ENCODE measurements at regions of chrX and their contacts with region 1.

Region 1: DNA sequence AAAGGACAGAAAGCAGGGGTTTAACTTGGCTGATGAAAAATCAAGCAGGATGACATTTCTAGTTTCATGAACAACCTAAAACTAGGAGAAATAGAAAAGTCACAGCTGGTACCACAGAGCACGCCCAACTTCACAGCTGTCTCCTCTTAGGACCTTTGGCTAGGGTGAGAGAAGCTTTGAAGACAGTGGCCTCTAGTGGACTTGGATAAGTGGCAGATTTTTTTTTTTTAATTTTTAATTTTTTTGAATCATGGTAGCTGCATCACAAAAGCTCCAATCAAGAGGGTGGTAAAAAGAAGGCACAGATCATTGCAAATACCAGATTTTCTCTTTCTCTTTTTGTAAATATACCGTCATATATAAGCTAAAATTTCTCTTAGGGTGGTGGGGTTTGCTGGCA is 20.2 kb upstream of the MAP3K15 start:
- DNase-seq: no peak
- H3K4me3 Mint-ChIP-seq: no peak overlapping the region
- H3K27ac Mint-ChIP-seq: no peak overlapping the region
- H3K4me1 Mint-ChIP-seq: no peaks in the 10 kb centered on the region
- H3K27me3 Mint-ChIP-seq: no peaks in the 10 kb centered on the region
- CTCF ChIP-seq: no peak

Region 2: GRCh38 chrX:19326567-19326966 is 208.9 kb before region 1 on chrX:
- CTCF ChIA-PET with region 1: no interaction called
- intact Hi-C with region 1: no loop called
- DNase-seq: no peak
- H3K4me3 Mint-ChIP-seq: no peak overlapping the region
- H3K27ac Mint-ChIP-seq: no peak overlapping the region
- H3K4me1 Mint-ChIP-seq: no peaks in the 10 kb centered on the region
- H3K27me3 Mint-ChIP-seq: peaks cover 25% of the 10 kb centered on the region
- CTCF ChIP-seq: no peak

Region 3: GRCh38 chrX:19372170-19372546 is 163.3 kb before region 1 on chrX:
- CTCF ChIA-PET with region 1: interaction called, 5 read pairs
- intact Hi-C with region 1: loop called (anchors 2 kb)
- DNase-seq: peak; percentile 77
- H3K4me3 Mint-ChIP-seq: peak overlapping the region; percentile 45
- H3K27ac Mint-ChIP-seq: no peak overlapping the region
- H3K4me1 Mint-ChIP-seq: peaks cover 9% of the 10 kb centered on the region
- H3K27me3 Mint-ChIP-seq: no peaks in the 10 kb centered on the region
- CTCF ChIP-seq: peak; percentile 58

Region 4: GRCh38 chrX:19382555-19383145 is 152.8 kb before region 1 on chrX:
- CTCF ChIA-PET with region 1: interaction called, 10 read pairs
- intact Hi-C with region 1: no loop called
- DNase-seq: peak; percentile 75
- H3K4me3 Mint-ChIP-seq: no peak overlapping the region
- H3K27ac Mint-ChIP-seq: no peak overlapping the region
- H3K4me1 Mint-ChIP-seq: no peaks in the 10 kb centered on the region
- H3K27me3 Mint-ChIP-seq: no peaks in the 10 kb centered on the region
- CTCF ChIP-seq: peak; percentile 53

Region 5: GRCh38 chrX:19616959-19617358 is 81.5 kb after region 1 on chrX:
- CTCF ChIA-PET with region 1: no interaction called
- intact Hi-C with region 1: no loop called
- DNase-seq: no peak
- H3K4me3 Mint-ChIP-seq: no peak overlapping the region
- H3K27ac Mint-ChIP-seq: no peak overlapping the region
- H3K4me1 Mint-ChIP-seq: peaks cover 8% of the 10 kb centered on the region
- H3K27me3 Mint-ChIP-seq: no peaks in the 10 kb centered on the region
- CTCF ChIP-seq: no peak

Region 6: DNA sequence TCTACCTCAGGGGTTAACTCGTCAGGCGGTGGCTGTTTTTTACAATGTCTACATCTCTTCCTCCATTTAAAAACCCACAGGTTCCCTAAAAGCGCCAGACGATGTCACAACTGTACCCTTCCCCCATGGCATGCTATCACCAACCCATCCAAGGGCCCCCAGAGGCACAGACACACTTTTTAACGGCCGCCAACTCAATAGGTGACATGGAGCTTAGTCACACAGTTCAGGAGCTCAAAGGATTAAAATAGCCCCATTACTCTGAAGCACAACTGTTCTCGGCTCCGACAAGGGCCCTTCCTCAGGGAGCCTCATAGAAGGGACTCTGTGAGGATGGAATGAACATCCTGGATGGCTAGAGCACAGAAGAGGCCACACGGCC is 339.6 kb after region 1 on chrX:
- CTCF ChIA-PET with region 1: no interaction called
- intact Hi-C with region 1: no loop called
- DNase-seq: no peak
- H3K4me3 Mint-ChIP-seq: no peak overlapping the region
- H3K27ac Mint-ChIP-seq: no peak overlapping the region
- H3K4me1 Mint-ChIP-seq: no peaks in the 10 kb centered on the region
- H3K27me3 Mint-ChIP-seq: no peaks in the 10 kb centered on the region
- CTCF ChIP-seq: no peak